ENCODE measurements at regions of chr12 and their contacts with region 1.

Region 1: GRCh38 chr12:41112910-41113309 is 75.2 kb upstream of the PDZRN4 start:
- DNase-seq: no peak
- ATAC-seq: no peak
- H3K4me3 ChIP-seq: no peak overlapping the region
- H3K4me3 Mint-ChIP-seq: no peak overlapping the region
- H3K27ac ChIP-seq: no peak overlapping the region
- H3K27ac Mint-ChIP-seq: no peak overlapping the region
- H3K4me1 ChIP-seq: no peaks in the 10 kb centered on the region
- H3K4me1 Mint-ChIP-seq: no peaks in the 10 kb centered on the region
- H3K27me3 ChIP-seq: no peaks in the 10 kb centered on the region
- H3K27me3 Mint-ChIP-seq: no peaks in the 10 kb centered on the region
- CTCF ChIP-seq: no peak

Region 2: DNA sequence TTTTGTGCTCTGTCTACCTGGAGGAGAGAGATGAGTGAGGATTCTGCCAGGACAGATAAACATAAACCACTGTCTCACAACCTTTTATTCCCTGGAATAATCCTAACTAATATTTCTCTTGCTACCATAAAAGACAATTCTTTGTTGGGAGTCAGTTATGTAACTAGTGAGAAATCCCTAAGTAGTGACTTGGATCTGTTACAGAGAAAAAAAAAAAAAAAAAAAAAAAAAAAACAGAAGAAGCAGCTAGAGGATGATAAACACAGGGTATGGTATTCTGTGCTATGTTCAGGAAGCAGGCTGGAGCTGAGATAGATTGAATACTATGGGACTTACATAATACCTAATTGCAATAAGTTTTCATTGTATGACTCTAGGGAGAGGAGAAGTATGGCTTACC is 241.9 kb before region 1 on chr12:
- CTCF ChIA-PET with region 1: no interaction called
- POLR2A ChIA-PET with region 1: no interaction called
- intact Hi-C with region 1: loop called in 1 of 2 experiments (anchors 10 kb)
- DNase-seq: no peak
- ATAC-seq: no peak
- H3K4me3 ChIP-seq: no peak overlapping the region
- H3K4me3 Mint-ChIP-seq: no peak overlapping the region
- H3K27ac ChIP-seq: no peak overlapping the region
- H3K27ac Mint-ChIP-seq: no peak overlapping the region
- H3K4me1 ChIP-seq: no peaks in the 10 kb centered on the region
- H3K4me1 Mint-ChIP-seq: no peaks in the 10 kb centered on the region
- H3K27me3 ChIP-seq: no peaks in the 10 kb centered on the region
- H3K27me3 Mint-ChIP-seq: no peaks in the 10 kb centered on the region
- CTCF ChIP-seq: no peak

Region 3: GRCh38 chr12:40999210-40999609 is 113.7 kb before region 1 on chr12:
- CTCF ChIA-PET with region 1: no interaction called
- POLR2A ChIA-PET with region 1: no interaction called
- intact Hi-C with region 1: no loop called
- DNase-seq: no peak
- ATAC-seq: no peak
- H3K4me3 ChIP-seq: no peak overlapping the region
- H3K4me3 Mint-ChIP-seq: no peak overlapping the region
- H3K27ac ChIP-seq: no peak overlapping the region
- H3K27ac Mint-ChIP-seq: no peak overlapping the region
- H3K4me1 ChIP-seq: no peaks in the 10 kb centered on the region
- H3K4me1 Mint-ChIP-seq: no peaks in the 10 kb centered on the region
- H3K27me3 ChIP-seq: no peaks in the 10 kb centered on the region
- H3K27me3 Mint-ChIP-seq: no peaks in the 10 kb centered on the region
- CTCF ChIP-seq: no peak

Measured in CD8-positive, alpha-beta T cell (primary cell).